Gastrocnemius medialis (tissue), 4 donors: ENCODE measurements at regions of chr9 and their contacts with region 1.

Region 1: GRCh38 chr9:131334629-131335367 is 45.3 kb downstream of the PLPP7 start:
- DNase-seq: peak; percentile 92 to 98
- ATAC-seq: peak; percentile 84 to 91
- H3K4me3 ChIP-seq: no peak overlapping the region
- H3K27ac ChIP-seq: peak overlapping the region; percentile 97 to 99 (median 98)
- H3K4me1 ChIP-seq: peaks cover 12 to 19% of the 10 kb centered on the region in 2 donors
- H3K27me3 ChIP-seq: no peaks in the 10 kb centered on the region
- CTCF ChIP-seq: no peak
- POLR2A ChIP-seq: no peak

Region 2: DNA sequence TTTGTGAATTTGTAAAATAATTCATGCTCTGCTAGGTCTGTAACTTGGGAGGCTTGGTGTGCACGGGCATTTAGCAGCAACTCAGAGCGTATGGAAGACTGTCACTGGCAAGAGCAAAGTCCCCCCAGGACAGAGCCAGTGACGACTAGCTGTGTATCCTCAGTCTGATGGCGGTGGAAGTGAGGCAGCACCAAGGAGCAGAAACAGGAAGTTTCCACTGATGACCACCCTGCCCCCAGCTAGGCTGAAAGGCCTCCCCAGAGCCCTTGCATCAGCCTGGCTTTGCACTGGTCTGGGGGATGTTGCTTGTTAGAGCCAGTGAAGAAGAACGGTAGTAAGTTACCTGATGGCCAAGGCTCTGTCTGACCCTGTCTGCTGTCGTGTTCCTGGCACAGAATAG is 566.5 kb before region 1 on chr9:
- in situ Hi-C with region 1: no loop called
- intact Hi-C with region 1: no loop called
- DNase-seq: no peak
- ATAC-seq: no peak
- H3K4me3 ChIP-seq: no peak overlapping the region
- H3K27ac ChIP-seq: no peak overlapping the region
- H3K4me1 ChIP-seq: peaks cover 24 to 26% of the 10 kb centered on the region in 2 donors
- H3K27me3 ChIP-seq: no peaks in the 10 kb centered on the region
- CTCF ChIP-seq: no peak
- POLR2A ChIP-seq: no peak

Region 3: GRCh38 chr9:130938652-130939404 is 396.0 kb before region 1 on chr9 and contains the start of gene FIBCD1:
- in situ Hi-C with region 1: no loop called
- intact Hi-C with region 1: no loop called
- DNase-seq: no peak
- ATAC-seq: no peak
- H3K4me3 ChIP-seq: peak within 1 kb of the TSS; percentile 19 to 51 (median 42)
- H3K27ac ChIP-seq: no peak within 1 kb of the TSS
- H3K4me1 ChIP-seq: peaks cover 0 to 7% of the 10 kb centered on the region in 2 donors
- H3K27me3 ChIP-seq: peaks cover 69 to 87% (median 80%) of the 10 kb centered on the region in 3 donors
- CTCF ChIP-seq: no peak
- POLR2A ChIP-seq: no peak
- total RNA-seq, gene FIBCD1: not detected

Region 4: DNA sequence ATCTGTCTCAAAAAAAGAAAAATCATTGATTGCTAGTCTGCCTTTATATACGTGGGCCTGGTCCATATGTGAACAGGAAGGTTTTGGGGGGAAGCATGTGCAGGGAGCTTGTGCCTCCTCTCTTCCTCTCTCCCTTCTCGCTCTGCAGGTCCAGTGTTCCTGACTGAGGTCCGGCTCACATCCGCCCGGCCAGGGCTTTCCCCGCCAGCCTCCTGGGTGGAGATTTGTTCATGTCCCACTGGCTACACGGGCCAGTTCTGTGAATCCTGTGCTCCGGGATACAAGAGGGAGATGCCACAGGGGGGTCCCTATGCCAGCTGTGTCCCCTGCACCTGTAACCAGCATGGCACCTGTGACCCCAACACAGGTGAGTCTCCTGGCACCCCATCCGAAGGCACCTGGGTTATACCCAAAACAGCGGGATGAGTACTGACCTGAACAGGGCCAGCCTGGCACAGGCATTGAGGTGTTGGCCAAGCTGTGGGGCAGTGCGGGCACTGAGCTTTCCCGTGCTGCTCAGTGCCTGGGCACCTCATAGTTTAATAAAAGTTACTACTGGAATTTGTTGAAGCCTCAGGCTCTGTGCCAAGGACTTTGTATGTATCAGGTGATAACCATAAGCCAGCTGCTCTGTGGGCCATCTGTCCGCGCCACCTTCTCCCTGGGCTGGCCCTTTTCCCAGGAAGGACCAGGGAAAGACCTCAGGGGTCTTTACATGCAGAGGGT is 277.9 kb before region 1 on chr9:
- in situ Hi-C with region 1: no loop called
- intact Hi-C with region 1: loop called (anchors 2 kb)
- DNase-seq: no peak
- ATAC-seq: no peak
- H3K4me3 ChIP-seq: no peak overlapping the region
- H3K27ac ChIP-seq: no peak overlapping the region
- H3K4me1 ChIP-seq: no peaks in the 10 kb centered on the region
- H3K27me3 ChIP-seq: peaks cover 0 to 4% (median under 1%) of the 10 kb centered on the region in 3 donors
- CTCF ChIP-seq: no peak
- POLR2A ChIP-seq: no peak

Region 5: DNA sequence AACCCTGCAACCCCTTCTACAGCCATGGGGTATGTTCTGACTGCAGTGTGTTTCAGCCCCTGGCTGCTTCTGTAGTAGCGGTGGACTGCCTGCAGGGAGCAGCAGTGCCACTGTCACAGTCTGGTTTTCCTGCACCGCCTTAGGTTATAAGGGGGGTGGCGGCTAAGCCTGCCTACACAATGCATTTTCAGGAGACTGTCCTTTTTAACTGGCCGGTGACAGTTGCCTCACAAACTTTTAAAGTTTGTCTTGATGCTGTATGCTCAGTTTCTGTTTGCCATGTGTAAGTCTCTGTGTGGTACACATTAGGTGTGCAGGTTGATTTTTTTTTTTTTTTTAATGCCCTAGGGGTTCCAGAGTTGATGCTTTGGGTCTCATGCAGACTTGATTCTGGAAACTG is 156.4 kb before region 1 on chr9:
- in situ Hi-C with region 1: loop called (anchors 5 to 10 kb)
- intact Hi-C with region 1: loop called (anchors 1 kb)
- DNase-seq: peak; percentile 41 to 66
- ATAC-seq: peak; percentile 88 to 96
- H3K4me3 ChIP-seq: no peak overlapping the region
- H3K27ac ChIP-seq: peak overlapping the region in 3 of 4 donors; percentile 28 to 55 (median 37)
- H3K4me1 ChIP-seq: peaks cover 8 to 15% of the 10 kb centered on the region in 2 donors
- H3K27me3 ChIP-seq: no peaks in the 10 kb centered on the region
- CTCF ChIP-seq: peak; percentile 92 to 95 (median 94)
- POLR2A ChIP-seq: no peak

Region 6: DNA sequence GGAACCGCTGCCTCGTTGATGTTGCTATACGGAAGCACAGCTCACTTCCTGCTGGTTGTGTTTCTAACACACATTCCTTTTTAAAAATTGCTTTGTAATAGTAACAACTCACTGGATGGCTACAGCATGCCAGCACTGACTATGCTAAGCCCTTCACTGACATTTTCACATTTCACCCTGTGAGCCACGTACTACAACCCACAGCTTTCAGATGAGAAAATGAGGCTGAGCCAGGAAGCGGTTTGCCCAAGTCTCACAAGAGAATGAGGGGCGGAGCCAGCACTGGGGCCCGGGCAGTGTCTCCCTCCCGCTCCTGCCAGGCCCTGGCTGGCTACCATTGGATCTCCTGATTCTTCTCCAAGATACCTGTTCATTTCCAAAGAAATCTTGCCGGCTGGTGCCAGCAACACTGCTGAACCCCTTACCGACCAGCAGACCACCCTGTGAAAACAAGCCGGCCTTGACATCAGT is 96.8 kb before region 1 on chr9:
- in situ Hi-C with region 1: loop called (anchors 5 to 10 kb)
- intact Hi-C with region 1: loop called (anchors 1 kb)
- DNase-seq: peak; percentile 33 to 64
- ATAC-seq: peak; percentile 39 to 58
- H3K4me3 ChIP-seq: peak overlapping the region in 1 of 4 donors; percentile 8
- H3K27ac ChIP-seq: peak overlapping the region; percentile 3 to 75 (median 60)
- H3K4me1 ChIP-seq: peaks cover 17 to 22% of the 10 kb centered on the region in 2 donors
- H3K27me3 ChIP-seq: no peaks in the 10 kb centered on the region
- CTCF ChIP-seq: no peak
- POLR2A ChIP-seq: no peak

Region 7: DNA sequence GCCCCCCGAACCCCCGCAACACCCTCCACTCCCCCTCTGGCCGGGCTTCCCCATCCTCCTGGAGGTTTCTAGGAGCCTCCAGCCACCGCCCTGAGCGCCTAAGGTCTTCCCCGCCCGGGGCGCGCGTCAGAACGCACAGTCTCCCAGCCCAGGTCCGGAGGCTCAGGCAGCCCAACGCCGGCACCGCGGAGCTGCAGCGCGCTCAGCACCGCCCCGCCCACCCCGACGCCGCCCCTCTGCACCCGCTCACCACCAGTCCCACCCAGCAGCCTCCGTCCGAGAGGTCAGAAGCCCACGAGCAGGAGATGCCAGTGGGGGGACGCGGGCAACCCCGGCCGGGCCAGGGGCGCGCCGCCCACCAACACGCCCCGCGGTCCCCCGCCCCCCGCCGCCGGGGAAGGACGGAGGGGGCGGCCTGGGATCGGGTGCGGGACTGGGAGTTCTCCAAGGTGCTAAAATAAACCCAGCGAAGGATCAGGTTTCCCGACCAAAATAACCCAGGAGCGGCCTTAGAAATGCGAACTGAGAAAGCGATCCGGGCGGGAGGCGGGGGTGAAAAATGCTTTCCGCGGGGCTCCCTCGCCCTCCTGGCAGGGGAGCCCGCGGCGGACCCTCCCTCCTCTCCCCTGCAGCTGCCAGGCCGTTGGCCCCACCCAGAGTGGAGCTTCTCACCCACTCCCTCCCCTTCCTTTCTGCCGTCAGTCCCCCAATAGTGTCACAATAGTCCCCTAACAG is 51.9 kb before region 1 on chr9:
- in situ Hi-C with region 1: no loop called
- intact Hi-C with region 1: loop called (anchors 5 kb)
- DNase-seq: peak; percentile 76 to 87
- ATAC-seq: peak; percentile 81 to 87
- H3K4me3 ChIP-seq: peak overlapping the region; percentile 46 to 63 (median 54)
- H3K27ac ChIP-seq: peak overlapping the region; percentile 96 to 100 (median 98)
- H3K4me1 ChIP-seq: peaks cover 32 to 41% of the 10 kb centered on the region in 2 donors
- H3K27me3 ChIP-seq: no peaks in the 10 kb centered on the region
- CTCF ChIP-seq: no peak
- POLR2A ChIP-seq: peak; percentile 52 to 58

Region 8: DNA sequence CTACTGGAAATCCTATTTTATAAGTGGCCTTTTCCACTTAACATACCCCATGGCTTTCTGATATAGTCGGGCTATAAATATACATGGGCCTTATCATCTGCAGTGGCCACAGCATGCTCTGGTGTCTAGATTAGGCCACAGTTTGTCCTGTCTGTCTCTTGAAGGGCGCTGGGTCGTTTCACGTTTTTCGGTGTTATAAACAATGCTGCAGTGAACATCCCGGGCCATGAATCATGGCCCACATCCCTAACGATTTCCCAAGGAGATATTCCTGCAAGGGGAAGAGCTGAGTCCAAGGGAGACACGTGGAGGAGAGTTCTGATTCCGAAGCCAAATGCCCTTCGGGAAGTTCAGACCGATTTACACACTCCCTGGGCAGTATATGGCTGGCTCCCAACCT is 36.9 kb before region 1 on chr9:
- in situ Hi-C with region 1: no loop called
- intact Hi-C with region 1: loop called (anchors 5 kb)
- DNase-seq: peak in 1 of 2 donors; percentile 81
- ATAC-seq: peak; percentile 59 to 64
- H3K4me3 ChIP-seq: no peak overlapping the region
- H3K27ac ChIP-seq: peak overlapping the region; percentile 96 to 100 (median 98)
- H3K4me1 ChIP-seq: peaks cover 71 to 85% of the 10 kb centered on the region in 2 donors
- H3K27me3 ChIP-seq: no peaks in the 10 kb centered on the region
- CTCF ChIP-seq: no peak
- POLR2A ChIP-seq: no peak

Region 9: GRCh38 chr9:131370638-131371037 is 35.8 kb after region 1 on chr9:
- in situ Hi-C with region 1: no loop called
- intact Hi-C with region 1: no loop called
- DNase-seq: no peak
- ATAC-seq: no peak
- H3K4me3 ChIP-seq: no peak overlapping the region
- H3K27ac ChIP-seq: no peak overlapping the region
- H3K4me1 ChIP-seq: peaks cover 12 to 14% of the 10 kb centered on the region in 2 donors
- H3K27me3 ChIP-seq: no peaks in the 10 kb centered on the region
- CTCF ChIP-seq: no peak
- POLR2A ChIP-seq: no peak

Region 10: DNA sequence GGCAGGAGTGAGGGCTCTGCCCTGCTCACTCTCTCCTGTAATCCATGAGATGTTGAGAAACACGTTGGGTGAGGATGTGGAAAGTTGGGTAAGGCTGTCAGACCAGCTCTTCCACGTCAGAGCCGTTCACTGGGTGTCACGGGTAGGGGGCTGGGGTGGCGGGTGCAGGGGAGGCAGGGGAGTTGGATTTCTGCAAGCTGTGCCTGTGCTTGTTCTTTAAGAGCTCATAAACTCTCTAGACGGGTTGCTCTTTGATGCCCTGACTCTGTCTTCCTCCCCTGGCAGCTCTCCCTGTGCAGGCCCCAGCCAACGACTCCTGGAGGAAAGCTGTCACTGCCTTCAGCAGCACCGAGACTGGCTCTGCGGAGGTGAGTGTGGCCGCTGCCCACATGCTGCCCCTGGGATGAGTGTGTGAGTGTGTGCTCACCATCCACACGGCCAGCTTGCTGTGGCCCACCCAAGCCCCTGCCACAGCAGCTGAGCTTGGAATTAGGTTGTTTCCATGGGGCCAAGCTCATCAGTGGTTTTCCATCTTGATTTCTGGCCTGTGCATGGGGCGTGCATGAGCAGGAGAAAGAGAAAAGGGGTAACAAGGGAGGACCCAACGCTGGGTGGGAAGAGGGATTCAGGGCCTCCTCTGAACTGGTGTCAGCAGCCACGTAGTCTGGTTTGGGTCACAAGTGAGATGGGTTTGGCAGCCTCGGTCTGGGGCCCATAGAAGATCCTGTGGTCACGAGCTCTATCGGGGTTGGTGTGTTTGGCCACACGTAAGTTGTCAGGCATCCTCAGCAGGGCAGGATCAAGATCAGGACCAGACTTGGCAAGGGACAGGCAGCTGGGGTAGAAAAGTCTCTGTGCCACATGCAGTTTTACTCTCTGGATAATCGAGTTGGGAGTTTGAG is 146.9 kb after region 1 on chr9:
- in situ Hi-C with region 1: no loop called
- intact Hi-C with region 1: no loop called
- DNase-seq: peak in 1 of 2 donors; percentile 68
- ATAC-seq: peak in 1 of 2 donors; percentile 3
- H3K4me3 ChIP-seq: no peak overlapping the region
- H3K27ac ChIP-seq: peak overlapping the region; percentile 83 to 94 (median 90)
- H3K4me1 ChIP-seq: peaks cover 32 to 57% of the 10 kb centered on the region in 2 donors
- H3K27me3 ChIP-seq: no peaks in the 10 kb centered on the region
- CTCF ChIP-seq: no peak
- POLR2A ChIP-seq: no peak